MCF 10A (cell line): ENCODE measurements at regions of chr2 and their contacts with region 1.

Region 1: DNA sequence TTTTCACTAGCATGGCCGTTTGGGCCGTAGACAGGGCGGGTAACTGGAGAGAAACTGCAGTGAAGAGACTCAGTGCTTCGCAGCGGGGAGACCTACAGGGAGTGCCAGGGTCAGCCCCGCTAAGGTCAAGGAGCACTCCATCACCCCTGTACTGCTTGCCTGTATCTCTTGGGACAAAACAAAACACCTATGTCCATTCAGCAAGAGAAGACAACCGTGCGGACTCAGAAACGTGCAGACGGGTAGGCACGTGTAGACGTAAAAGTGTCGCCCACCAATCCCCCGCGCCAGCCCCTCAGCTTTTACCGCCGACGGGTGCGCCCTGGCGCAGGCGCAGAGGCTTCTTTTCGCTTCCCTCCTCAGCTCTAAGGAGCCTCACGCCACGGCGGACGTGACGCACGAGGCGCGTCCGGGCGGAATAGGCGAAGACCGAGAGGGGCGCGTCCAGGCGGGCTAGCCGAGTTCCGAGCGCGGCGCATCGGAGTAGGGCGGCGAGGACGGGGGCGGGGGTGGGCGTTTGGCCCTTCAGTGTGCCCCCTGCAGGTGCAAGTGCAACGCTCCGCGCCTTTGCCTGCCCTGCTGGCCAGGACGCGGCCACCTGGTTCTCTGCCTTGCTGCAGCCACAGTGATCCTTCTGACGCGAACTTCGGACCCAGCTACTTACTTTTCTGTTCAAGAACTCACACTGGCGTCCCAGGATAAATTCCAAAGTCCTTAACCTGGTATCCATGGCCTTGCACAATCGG is 3.3 kb upstream of the SOS1 start:
- DNase-seq: peak; percentile 93
- H3K4me3 Mint-ChIP-seq: peak overlapping the region; percentile 98
- H3K27ac Mint-ChIP-seq: peak overlapping the region; percentile 96
- H3K4me1 Mint-ChIP-seq: peaks cover 27% of the 10 kb centered on the region
- H3K27me3 Mint-ChIP-seq: no peaks in the 10 kb centered on the region
- CTCF ChIP-seq: peak; percentile 35

Region 2: DNA sequence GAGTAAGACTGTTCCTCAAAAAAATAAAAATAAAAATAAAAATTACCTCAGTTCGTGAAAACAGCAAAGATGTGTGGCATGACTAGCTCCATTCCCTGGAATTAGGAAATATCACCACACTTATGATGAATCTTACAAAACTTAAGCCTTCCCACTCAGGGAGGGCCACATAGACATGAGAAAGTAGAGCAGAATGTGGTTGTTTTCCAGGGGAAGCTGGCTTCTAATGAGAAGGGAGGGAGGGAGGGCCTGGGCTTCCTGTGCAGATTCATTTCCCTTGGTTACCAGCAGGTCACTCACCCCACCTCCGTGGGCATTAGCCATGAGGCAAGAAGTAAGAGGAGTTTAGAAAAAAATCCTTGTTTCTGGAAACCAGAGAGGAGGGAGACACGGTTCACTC is 1295.0 kb before region 1 on chr2:
- CTCF ChIA-PET with region 1: no interaction called
- POLR2A ChIA-PET with region 1: no interaction called
- intact Hi-C with region 1: no loop called
- DNase-seq: peak; percentile 52
- H3K4me3 Mint-ChIP-seq: no peak overlapping the region
- H3K27ac Mint-ChIP-seq: no peak overlapping the region
- H3K4me1 Mint-ChIP-seq: peaks cover 5% of the 10 kb centered on the region
- H3K27me3 Mint-ChIP-seq: no peaks in the 10 kb centered on the region
- CTCF ChIP-seq: no peak

Region 3: GRCh38 chr2:38720613-38721241 is 403.4 kb before region 1 on chr2:
- CTCF ChIA-PET with region 1: no interaction called
- POLR2A ChIA-PET with region 1: no interaction called
- intact Hi-C with region 1: no loop called
- DNase-seq: peak; percentile 97
- H3K4me3 Mint-ChIP-seq: no peak overlapping the region
- H3K27ac Mint-ChIP-seq: peak overlapping the region; percentile 36
- H3K4me1 Mint-ChIP-seq: peaks cover 19% of the 10 kb centered on the region
- H3K27me3 Mint-ChIP-seq: no peaks in the 10 kb centered on the region
- CTCF ChIP-seq: no peak

Region 4: GRCh38 chr2:39059366-39059952 is 64.7 kb before region 1 on chr2:
- CTCF ChIA-PET with region 1: interaction called, 14 read pairs
- POLR2A ChIA-PET with region 1: interaction called, 54 read pairs
- intact Hi-C with region 1: loop called (anchors 2 kb)
- DNase-seq: peak; percentile 48
- H3K4me3 Mint-ChIP-seq: no peak overlapping the region
- H3K27ac Mint-ChIP-seq: no peak overlapping the region
- H3K4me1 Mint-ChIP-seq: no peaks in the 10 kb centered on the region
- H3K27me3 Mint-ChIP-seq: no peaks in the 10 kb centered on the region
- CTCF ChIP-seq: peak; percentile 55

Region 5: GRCh38 chr2:39094852-39095306 is 29.3 kb before region 1 on chr2:
- CTCF ChIA-PET with region 1: interaction called, 11 read pairs
- POLR2A ChIA-PET with region 1: interaction called, 60 read pairs
- intact Hi-C with region 1: no loop called
- DNase-seq: no peak
- H3K4me3 Mint-ChIP-seq: no peak overlapping the region
- H3K27ac Mint-ChIP-seq: no peak overlapping the region
- H3K4me1 Mint-ChIP-seq: peaks cover 27% of the 10 kb centered on the region
- H3K27me3 Mint-ChIP-seq: no peaks in the 10 kb centered on the region
- CTCF ChIP-seq: no peak

Region 6: GRCh38 chr2:39135690-39136259 is 11.6 kb after region 1 on chr2:
- CTCF ChIA-PET with region 1: interaction called, 4 read pairs
- POLR2A ChIA-PET with region 1: interaction called, 21 read pairs
- intact Hi-C with region 1: no loop called
- DNase-seq: no peak
- H3K4me3 Mint-ChIP-seq: no peak overlapping the region
- H3K27ac Mint-ChIP-seq: no peak overlapping the region
- H3K4me1 Mint-ChIP-seq: peaks cover 10% of the 10 kb centered on the region
- H3K27me3 Mint-ChIP-seq: no peaks in the 10 kb centered on the region
- CTCF ChIP-seq: no peak

Region 7: GRCh38 chr2:39227628-39228412 is 103.6 kb after region 1 on chr2:
- CTCF ChIA-PET with region 1: interaction called, 48 read pairs
- POLR2A ChIA-PET with region 1: interaction called, 59 read pairs
- intact Hi-C with region 1: loop called (anchors 1 kb)
- DNase-seq: peak; percentile 65
- H3K4me3 Mint-ChIP-seq: no peak overlapping the region
- H3K27ac Mint-ChIP-seq: no peak overlapping the region
- H3K4me1 Mint-ChIP-seq: peaks cover 5% of the 10 kb centered on the region
- H3K27me3 Mint-ChIP-seq: no peaks in the 10 kb centered on the region
- CTCF ChIP-seq: peak; percentile 71

Region 8: GRCh38 chr2:39313575-39313974 is 189.4 kb after region 1 on chr2:
- CTCF ChIA-PET with region 1: no interaction called
- POLR2A ChIA-PET with region 1: no interaction called
- intact Hi-C with region 1: no loop called
- DNase-seq: peak; percentile 27
- H3K4me3 Mint-ChIP-seq: no peak overlapping the region
- H3K27ac Mint-ChIP-seq: no peak overlapping the region
- H3K4me1 Mint-ChIP-seq: no peaks in the 10 kb centered on the region
- H3K27me3 Mint-ChIP-seq: no peaks in the 10 kb centered on the region
- CTCF ChIP-seq: no peak